ENCODE measurements at regions of chr2 and their contacts with region 1.

Region 1: GRCh38 chr2:69914170-69914960 is 544 bp upstream of the MXD1 start:
- DNase-seq: peak in 9 of 14 experiments; percentile 13 to 100 (median 100)
- ATAC-seq: peak; percentile 92
- H3K4me3 ChIP-seq: peak overlapping the region; percentile 86
- H3K4me3 Mint-ChIP-seq: peak overlapping the region; percentile 89
- H3K27ac ChIP-seq: peak overlapping the region; percentile 94
- H3K27ac Mint-ChIP-seq: peak overlapping the region; percentile 75
- H3K4me1 ChIP-seq: peaks cover 15% of the 10 kb centered on the region
- H3K4me1 Mint-ChIP-seq: peaks cover 33% of the 10 kb centered on the region
- H3K27me3 ChIP-seq: no peaks in the 10 kb centered on the region
- H3K27me3 Mint-ChIP-seq: no peaks in the 10 kb centered on the region
- CTCF ChIP-seq: no peak

Region 2: DNA sequence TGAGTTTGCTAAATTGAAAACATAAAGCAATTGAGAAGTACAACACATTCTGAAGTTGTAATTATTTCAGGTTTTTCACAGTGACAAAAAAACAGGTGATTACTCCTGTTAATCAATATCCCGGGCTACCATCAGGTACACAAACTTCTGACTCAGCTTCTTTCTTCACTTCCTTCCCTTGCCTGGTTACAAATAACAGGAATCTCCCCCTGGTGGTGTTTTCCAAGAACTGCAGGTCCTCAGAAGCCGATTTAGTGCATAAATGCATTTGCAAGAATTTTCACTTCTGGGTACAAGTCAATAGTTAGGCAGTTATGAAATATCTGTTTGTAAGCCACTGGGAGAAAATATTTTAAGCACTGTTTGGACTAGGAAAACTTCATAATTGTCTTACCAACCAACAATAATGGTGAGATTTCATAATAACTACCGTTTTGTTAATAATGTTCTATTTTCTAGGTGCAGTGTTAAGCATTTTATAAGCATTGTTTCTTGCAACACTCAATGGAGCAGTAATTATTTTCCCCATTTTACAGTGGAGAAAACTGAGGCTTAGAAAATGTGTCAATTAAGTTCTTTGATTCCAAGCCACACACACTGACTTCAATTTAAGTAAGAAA is 97.3 kb before region 1 on chr2:
- CTCF ChIA-PET with region 1: no interaction called
- POLR2A ChIA-PET with region 1: no interaction called
- intact Hi-C with region 1: no loop called
- DNase-seq: peak; percentile 46 to 89 (median 63)
- ATAC-seq: peak; percentile 95
- H3K4me3 ChIP-seq: no peak overlapping the region
- H3K4me3 Mint-ChIP-seq: no peak overlapping the region
- H3K27ac ChIP-seq: no peak overlapping the region
- H3K27ac Mint-ChIP-seq: no peak overlapping the region
- H3K4me1 ChIP-seq: no peaks in the 10 kb centered on the region
- H3K4me1 Mint-ChIP-seq: peaks cover 5% of the 10 kb centered on the region
- H3K27me3 ChIP-seq: no peaks in the 10 kb centered on the region
- H3K27me3 Mint-ChIP-seq: no peaks in the 10 kb centered on the region
- CTCF ChIP-seq: peak; percentile 87

Region 3: DNA sequence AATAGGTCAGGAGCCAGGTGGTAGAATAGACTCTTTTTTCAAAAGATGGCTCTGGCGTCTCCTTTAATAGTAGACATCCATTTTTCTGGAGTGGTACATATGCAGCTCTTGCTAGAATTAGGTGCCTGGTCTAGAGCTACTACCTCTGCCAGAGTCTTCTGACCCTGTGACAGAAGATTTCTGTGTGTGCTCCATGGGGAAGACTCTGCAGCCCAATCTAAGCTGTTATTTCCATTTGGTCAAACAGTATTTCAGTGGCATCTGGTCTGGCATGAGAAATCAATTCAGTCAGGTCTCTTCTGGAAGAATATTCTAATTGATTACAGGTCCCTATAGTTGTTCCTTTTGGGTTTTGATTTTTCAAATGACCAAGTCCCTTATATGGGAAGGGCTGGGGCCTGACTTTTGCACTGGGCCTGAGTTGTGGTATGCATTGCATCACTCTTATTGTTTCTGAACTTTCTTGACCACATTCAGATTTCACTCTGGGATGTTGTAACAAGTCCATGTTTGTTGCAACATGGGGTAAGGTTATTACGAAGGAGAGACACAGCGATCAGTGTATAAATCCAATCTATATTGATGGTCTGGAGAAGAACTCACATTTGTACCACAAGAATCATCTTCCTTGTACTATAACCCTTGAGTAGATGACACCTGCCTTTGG is 12.6 kb after region 1 on chr2:
- CTCF ChIA-PET with region 1: no interaction called
- POLR2A ChIA-PET with region 1: interaction called, 11 read pairs
- intact Hi-C with region 1: no loop called
- DNase-seq: peak in 1 of 14 experiments; percentile 37
- ATAC-seq: no peak
- H3K4me3 ChIP-seq: no peak overlapping the region
- H3K4me3 Mint-ChIP-seq: no peak overlapping the region
- H3K27ac ChIP-seq: no peak overlapping the region
- H3K27ac Mint-ChIP-seq: no peak overlapping the region
- H3K4me1 ChIP-seq: peaks cover 4% of the 10 kb centered on the region
- H3K4me1 Mint-ChIP-seq: peaks cover 20% of the 10 kb centered on the region
- H3K27me3 ChIP-seq: no peaks in the 10 kb centered on the region
- H3K27me3 Mint-ChIP-seq: no peaks in the 10 kb centered on the region
- CTCF ChIP-seq: no peak

Region 4: DNA sequence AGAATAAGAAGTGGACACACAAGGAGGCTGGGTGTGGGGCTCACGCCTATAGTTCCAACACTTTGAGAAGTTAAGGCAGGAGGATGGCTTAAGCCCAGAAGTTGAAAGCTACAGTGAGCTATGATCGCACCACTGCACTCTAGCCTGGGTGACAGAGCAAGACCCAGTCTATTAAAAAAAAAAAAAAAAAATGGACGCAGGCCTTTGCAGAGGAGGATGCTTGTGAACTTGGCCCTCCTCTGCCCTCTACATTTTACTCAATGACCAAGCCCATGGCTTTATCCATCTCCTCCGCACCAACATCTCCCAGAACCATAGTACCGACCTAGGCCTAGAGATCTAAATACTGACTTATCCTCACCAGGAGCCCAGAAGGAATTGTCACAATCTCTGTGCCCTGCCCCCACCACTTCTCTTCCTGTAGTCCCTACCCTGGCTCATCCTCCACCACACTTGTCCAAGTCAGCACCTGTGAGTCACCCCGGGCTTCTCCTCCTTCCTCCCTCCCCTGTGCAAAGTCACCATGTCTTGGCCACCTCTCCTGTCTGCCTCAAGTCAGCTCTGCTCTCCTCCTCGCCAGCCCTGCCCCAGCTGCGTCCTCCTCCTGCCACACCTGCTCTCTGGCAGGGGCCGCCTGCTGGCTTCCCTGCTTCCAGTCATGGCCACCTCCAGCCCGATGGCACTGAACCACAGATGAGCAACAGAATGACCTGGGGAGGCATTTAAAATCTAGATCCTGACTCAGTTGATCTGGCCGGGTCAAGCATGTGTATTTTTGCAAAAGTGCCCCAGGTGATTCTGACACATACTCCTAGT is 82.9 kb after region 1 on chr2:
- CTCF ChIA-PET with region 1: no interaction called
- POLR2A ChIA-PET with region 1: no interaction called
- intact Hi-C with region 1: no loop called
- DNase-seq: peak in 3 of 14 experiments; percentile 38 to 66 (median 49)
- ATAC-seq: no peak
- H3K4me3 ChIP-seq: no peak overlapping the region
- H3K4me3 Mint-ChIP-seq: no peak overlapping the region
- H3K27ac ChIP-seq: no peak overlapping the region
- H3K27ac Mint-ChIP-seq: no peak overlapping the region
- H3K4me1 ChIP-seq: peaks cover 4% of the 10 kb centered on the region
- H3K4me1 Mint-ChIP-seq: peaks cover 4% of the 10 kb centered on the region
- H3K27me3 ChIP-seq: no peaks in the 10 kb centered on the region
- H3K27me3 Mint-ChIP-seq: no peaks in the 10 kb centered on the region
- CTCF ChIP-seq: no peak

Region 5: DNA sequence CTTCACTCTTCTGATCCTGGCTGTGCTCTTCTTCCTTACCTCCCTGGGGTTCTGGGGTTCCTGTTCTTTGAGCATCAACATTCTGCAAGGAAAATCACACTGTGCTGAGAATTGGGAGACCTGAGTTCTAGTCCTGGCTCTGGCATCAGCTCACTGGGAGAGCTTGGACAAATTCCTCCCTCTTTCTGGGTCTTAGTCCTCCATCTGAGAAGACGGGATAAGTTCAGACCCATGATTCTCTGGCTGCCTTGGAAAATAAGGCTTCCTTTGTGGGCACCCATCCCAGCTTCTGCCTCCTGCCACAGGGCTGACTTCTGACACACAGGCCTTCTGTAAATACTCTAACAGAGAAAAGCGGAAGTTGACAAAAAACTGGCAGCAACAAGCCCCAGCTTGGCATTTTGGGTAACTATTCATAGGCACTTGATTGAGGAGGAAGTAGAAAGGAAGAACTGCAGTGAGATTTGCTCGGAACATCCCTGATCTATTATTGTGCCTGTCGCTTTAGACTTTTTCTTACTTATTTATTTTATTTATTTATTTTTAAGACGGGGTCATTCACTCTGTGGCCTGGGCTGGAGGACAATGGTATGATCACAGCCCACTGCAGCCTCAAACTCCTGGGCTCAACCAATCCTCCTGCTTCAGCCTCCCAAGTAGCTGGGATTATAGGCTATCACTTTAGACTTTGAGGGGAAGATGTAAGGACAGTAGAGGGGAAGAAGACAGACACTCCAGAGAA is 180.8 kb after region 1 on chr2:
- CTCF ChIA-PET with region 1: no interaction called
- POLR2A ChIA-PET with region 1: interaction called, 219 read pairs
- intact Hi-C with region 1: no loop called
- DNase-seq: peak in 11 of 14 experiments; percentile 36 to 89 (median 53)
- ATAC-seq: peak; percentile 93
- H3K4me3 ChIP-seq: peak overlapping the region; percentile 43
- H3K4me3 Mint-ChIP-seq: peak overlapping the region; percentile 83
- H3K27ac ChIP-seq: peak overlapping the region; percentile 74 to 80
- H3K27ac Mint-ChIP-seq: peak overlapping the region; percentile 96
- H3K4me1 ChIP-seq: peaks cover 57% of the 10 kb centered on the region
- H3K4me1 Mint-ChIP-seq: peaks cover 46% of the 10 kb centered on the region
- H3K27me3 ChIP-seq: no peaks in the 10 kb centered on the region
- H3K27me3 Mint-ChIP-seq: no peaks in the 10 kb centered on the region
- CTCF ChIP-seq: no peak

Region 6: DNA sequence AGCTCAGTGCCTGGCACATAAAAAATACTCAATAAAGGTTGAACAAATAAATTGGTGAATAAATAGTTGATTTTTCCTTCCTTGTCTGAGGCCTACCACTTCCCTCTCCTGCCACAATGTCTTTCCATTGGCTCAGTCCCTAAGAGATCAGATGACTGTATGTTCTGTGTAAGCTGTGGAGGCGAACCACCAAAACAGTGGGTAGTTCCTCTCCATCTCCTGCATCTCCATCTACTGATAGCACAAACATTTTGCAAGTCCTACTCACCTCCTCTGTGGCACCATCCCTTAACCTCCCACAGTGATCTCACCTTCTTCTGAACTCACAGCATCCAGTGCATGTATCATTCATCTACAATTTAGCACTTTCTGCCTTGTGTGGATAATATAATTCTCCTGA is 223.2 kb after region 1 on chr2:
- CTCF ChIA-PET with region 1: interaction called, 55 read pairs
- POLR2A ChIA-PET with region 1: interaction called, 196 read pairs
- intact Hi-C with region 1: loop called (anchors 1 kb)
- DNase-seq: peak in 5 of 14 experiments; percentile 20 to 60 (median 53)
- ATAC-seq: no peak
- H3K4me3 ChIP-seq: no peak overlapping the region
- H3K4me3 Mint-ChIP-seq: peak overlapping the region; percentile 88
- H3K27ac ChIP-seq: peak overlapping the region; percentile 39 to 62
- H3K27ac Mint-ChIP-seq: peak overlapping the region; percentile 96
- H3K4me1 ChIP-seq: peaks cover 95% of the 10 kb centered on the region
- H3K4me1 Mint-ChIP-seq: peaks cover 82% of the 10 kb centered on the region
- H3K27me3 ChIP-seq: no peaks in the 10 kb centered on the region
- H3K27me3 Mint-ChIP-seq: no peaks in the 10 kb centered on the region
- CTCF ChIP-seq: no peak

Region 7: GRCh38 chr2:70258532-70258874 is 344.1 kb after region 1 on chr2:
- CTCF ChIA-PET with region 1: interaction called, 3 read pairs
- POLR2A ChIA-PET with region 1: interaction called, 48 read pairs
- intact Hi-C with region 1: loop called in 1 of 2 experiments (anchors 5 kb)
- DNase-seq: peak in 3 of 14 experiments; percentile 2 to 37 (median 11)
- ATAC-seq: no peak
- H3K4me3 ChIP-seq: peak overlapping the region; percentile 73
- H3K4me3 Mint-ChIP-seq: peak overlapping the region; percentile 95
- H3K27ac ChIP-seq: peak overlapping the region in 1 of 2 donors; percentile 45
- H3K27ac Mint-ChIP-seq: peak overlapping the region; percentile 86
- H3K4me1 ChIP-seq: peaks cover 20% of the 10 kb centered on the region
- H3K4me1 Mint-ChIP-seq: peaks cover 42% of the 10 kb centered on the region
- H3K27me3 ChIP-seq: no peaks in the 10 kb centered on the region
- H3K27me3 Mint-ChIP-seq: no peaks in the 10 kb centered on the region
- CTCF ChIP-seq: no peak